ENCODE measurements at regions of chr12 and their contacts with region 1.

Region 1: DNA sequence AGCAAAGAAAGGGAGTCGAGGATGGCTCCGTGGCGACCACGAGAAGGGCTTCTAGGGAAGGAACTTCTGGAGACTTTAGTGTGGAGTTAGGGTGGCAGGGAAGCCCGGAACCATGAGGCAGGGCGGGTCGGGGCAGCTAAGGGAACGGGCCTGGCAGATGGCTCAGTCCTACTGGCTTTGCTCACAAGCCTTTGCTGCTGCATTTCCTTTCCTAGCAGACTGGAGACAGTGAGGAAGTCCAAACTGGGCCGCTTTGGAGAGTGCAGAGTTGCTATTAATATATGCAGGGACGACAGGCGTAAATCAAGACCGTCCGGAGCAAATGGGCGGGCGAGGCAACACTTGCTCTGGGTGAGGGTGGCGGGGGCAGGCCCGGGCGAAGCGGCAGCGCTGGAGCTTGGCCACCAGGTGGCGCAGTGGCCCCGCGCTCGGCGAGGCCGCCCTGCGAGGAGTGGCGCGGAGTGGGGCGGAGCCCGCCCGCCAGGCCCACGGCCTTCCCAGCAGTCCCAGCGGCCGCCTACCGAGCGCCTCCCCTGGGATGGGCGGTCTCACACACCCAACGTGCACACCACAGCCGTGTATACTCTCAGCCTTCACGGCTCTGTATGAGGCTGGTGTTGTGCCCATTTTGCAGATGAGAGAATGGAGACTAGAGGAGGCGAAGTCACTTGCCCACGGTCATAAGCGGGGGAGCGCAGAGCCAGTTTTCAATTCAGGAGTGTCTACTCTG is 24.4 kb upstream of the LRTM2 start:
- DNase-seq: peak; percentile 89
- H3K4me3 ChIP-seq: peak overlapping the region; percentile 32 to 62 (median 35)
- H3K27ac ChIP-seq: no peak overlapping the region
- H3K4me1 ChIP-seq: peaks cover 12% of the 10 kb centered on the region
- H3K27me3 ChIP-seq: no peaks in the 10 kb centered on the region
- CTCF ChIP-seq: peak; percentile 88 to 99
- POLR2A ChIP-seq: peak; percentile 67

Region 2: DNA sequence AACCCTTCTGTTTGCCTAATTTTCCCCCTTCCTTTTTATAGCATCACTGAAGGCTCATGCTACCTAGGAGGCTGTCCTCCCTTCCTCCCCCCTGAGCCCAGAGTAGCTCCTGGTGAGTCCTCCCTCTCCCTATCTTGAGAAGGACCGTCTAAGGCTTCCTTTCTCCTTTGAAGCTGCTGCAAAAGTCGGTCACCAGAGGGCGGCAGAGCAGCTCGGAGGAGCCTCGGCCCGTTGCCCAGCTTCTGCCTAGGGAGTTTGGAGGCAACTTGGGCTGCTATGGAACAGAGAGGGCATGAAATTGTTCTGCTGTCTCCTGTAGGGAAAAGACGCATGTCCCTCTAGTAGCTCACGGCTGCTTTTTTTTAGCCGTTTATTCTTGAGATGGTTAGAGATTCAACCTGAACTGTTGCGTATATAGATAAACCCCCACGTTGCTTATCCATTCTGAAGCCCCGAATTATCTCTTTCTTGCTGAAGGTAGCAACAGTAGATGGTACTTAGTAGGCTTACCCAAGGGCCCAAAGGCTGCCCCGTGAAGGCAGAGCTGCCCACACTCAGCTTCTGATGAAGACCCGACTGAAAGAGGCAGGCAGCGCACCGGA is 161.3 kb before region 1 on chr12:
- CTCF ChIA-PET with region 1: interaction called, 185 read pairs
- POLR2A ChIA-PET with region 1: interaction called, 3 read pairs
- dilution Hi-C with region 1: no loop called
- intact Hi-C with region 1: loop called (anchors 1 kb)
- DNase-seq: peak; percentile 65
- H3K4me3 ChIP-seq: no peak overlapping the region
- H3K27ac ChIP-seq: no peak overlapping the region
- H3K4me1 ChIP-seq: peaks cover 5% of the 10 kb centered on the region
- H3K27me3 ChIP-seq: peaks cover 36 to 42% of the 10 kb centered on the region in 2 experiments
- CTCF ChIP-seq: peak; percentile 85 to 87
- POLR2A ChIP-seq: no peak

Region 3: DNA sequence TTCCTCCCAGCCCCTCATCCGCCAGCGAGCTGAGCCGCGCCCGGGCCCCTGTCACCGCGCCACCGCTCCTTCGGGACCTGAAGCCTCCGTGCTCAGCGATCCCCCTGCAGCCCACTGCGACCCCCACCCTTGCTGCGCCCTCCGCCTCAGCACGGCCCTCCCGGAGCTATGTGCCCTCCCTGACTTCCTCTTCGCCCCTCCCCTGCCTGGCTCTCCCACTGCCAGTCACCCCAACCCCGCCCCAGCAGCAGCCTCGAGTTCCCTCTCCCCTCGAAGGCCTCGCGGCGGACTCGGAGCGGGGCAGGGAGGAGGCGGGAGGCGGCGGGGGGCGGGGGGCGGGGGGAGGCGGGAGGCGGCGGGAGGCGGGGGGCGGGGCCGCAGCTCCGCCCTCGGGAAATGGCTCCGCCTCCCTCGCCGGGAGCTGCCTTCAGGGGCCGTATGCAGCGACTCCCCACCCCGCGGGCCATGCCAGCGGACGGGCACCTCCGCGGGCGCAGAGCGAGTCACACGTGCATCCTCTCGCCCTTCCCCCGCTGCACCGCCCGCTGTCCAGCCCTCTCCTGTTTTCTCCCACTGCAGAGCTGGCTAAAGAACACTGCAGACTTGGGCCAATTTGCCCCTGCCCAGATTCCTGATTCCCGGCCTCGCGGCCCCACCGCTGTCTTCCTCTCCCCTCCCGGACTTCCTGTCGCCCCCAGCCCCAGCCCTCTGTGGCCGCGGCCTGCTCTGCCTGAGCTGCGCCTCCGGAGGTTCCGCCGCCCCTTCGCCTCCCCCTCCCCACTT is 134.2 kb before region 1 on chr12:
- CTCF ChIA-PET with region 1: interaction called, 840 read pairs
- POLR2A ChIA-PET with region 1: interaction called, 4 read pairs
- dilution Hi-C with region 1: no loop called
- intact Hi-C with region 1: no loop called
- DNase-seq: peak; percentile 90
- H3K4me3 ChIP-seq: peak overlapping the region in 1 of 3 experiments; percentile 37
- H3K27ac ChIP-seq: no peak overlapping the region
- H3K4me1 ChIP-seq: peaks cover 13% of the 10 kb centered on the region
- H3K27me3 ChIP-seq: no peaks in the 10 kb centered on the region
- CTCF ChIP-seq: no peak
- POLR2A ChIP-seq: no peak

Region 4: DNA sequence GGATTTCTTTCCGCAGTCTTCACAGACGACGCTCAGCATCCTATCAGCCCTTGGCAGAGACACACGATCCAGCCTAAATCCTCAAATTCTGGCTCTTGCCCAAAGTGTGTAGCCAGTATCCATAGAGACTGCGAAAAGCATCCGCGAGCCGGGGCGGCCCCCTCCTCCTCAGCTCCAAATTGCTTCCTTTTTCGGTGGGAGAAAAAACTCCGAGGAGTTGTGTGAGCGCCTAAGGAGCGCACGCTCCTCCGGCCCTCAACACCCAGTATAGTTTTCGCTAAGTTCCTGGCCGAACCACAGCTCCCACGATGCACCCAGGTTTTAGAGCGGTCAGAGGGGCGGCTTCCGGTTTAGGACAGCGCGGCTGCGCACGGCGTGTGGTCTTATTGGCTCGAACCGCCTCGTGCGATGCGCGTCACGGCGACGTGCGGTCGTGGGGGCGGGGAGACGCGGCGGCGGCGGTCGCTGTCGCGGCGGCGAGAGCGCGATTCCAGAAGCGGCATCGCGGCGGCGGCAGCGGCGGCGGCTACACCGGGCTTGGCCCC is 105.3 kb before region 1 on chr12 and contains the start of gene ADIPOR2:
- CTCF ChIA-PET with region 1: interaction called, 17 read pairs
- POLR2A ChIA-PET with region 1: interaction called, 3 read pairs
- dilution Hi-C with region 1: no loop called
- intact Hi-C with region 1: loop called (anchors 1 kb)
- DNase-seq: peak; percentile 94
- H3K4me3 ChIP-seq: peak within 1 kb of the TSS; percentile 72 to 95 (median 90)
- H3K27ac ChIP-seq: peak within 1 kb of the TSS; percentile 93
- H3K4me1 ChIP-seq: peaks cover 14% of the 10 kb centered on the region
- H3K27me3 ChIP-seq: no peaks in the 10 kb centered on the region
- CTCF ChIP-seq: no peak
- POLR2A ChIP-seq: peak; percentile 91
- total RNA-seq, gene ADIPOR2: 57.3 and 59.4 TPM in 2 replicates

Region 5: DNA sequence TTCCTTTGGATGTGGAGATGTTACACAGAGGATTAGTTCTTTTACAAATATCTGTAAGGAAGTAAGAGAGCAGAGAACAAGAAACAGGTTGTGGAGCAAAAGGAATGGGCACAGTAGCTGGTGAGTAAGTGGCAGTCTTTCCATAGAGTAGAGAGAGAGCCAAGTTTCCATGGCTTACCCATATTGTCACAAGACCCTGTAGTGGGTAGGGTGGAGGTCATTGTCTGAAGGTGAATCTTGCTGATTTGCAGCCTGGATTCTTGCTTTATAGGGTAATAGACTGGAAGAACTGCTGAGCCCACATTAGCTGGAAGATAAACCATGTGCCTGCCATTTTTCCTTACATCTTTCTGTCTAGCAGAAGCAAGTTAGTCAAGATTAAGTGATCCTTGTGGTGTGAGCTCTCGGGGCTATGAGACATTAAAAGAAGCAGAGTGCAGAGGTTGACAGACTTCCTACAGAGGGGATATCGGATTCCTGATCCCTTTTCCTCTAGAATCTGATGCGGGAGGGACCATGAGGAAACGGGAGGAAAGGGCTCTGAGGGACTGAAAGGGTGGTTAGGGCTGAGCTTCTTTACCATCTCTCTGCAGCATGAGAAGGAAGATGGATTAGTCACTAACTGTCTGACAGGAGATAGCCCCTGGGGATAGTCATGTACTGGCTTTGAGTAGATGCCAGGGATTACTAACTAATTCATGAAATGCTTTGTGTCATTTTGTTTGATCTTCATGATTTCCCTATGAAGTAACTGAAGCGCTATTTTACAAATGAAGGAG is 19.6 kb before region 1 on chr12:
- CTCF ChIA-PET with region 1: interaction called, 11 read pairs
- POLR2A ChIA-PET with region 1: no interaction called
- dilution Hi-C with region 1: no loop called
- intact Hi-C with region 1: no loop called
- DNase-seq: no peak
- H3K4me3 ChIP-seq: no peak overlapping the region
- H3K27ac ChIP-seq: no peak overlapping the region
- H3K4me1 ChIP-seq: peaks cover 9% of the 10 kb centered on the region
- H3K27me3 ChIP-seq: no peaks in the 10 kb centered on the region
- CTCF ChIP-seq: no peak
- POLR2A ChIP-seq: no peak

Region 6: GRCh38 chr12:2004113-2004929 is 208.4 kb after region 1 on chr12 and contains the start of gene DCP1B:
- CTCF ChIA-PET with region 1: interaction called, 6 read pairs
- POLR2A ChIA-PET with region 1: no interaction called
- dilution Hi-C with region 1: no loop called
- intact Hi-C with region 1: loop called (anchors 1 kb)
- DNase-seq: peak; percentile 98
- H3K4me3 ChIP-seq: peak within 1 kb of the TSS; percentile 31 to 87 (median 82)
- H3K27ac ChIP-seq: peak within 1 kb of the TSS; percentile 35
- H3K4me1 ChIP-seq: peaks cover 15% of the 10 kb centered on the region
- H3K27me3 ChIP-seq: peaks cover 0 to 6% of the 10 kb centered on the region in 2 experiments
- CTCF ChIP-seq: peak in 1 of 2 donors; percentile 14
- POLR2A ChIP-seq: peak; percentile 64
- total RNA-seq, gene DCP1B: 10.6 and 11.2 TPM in 2 replicates

Measured in endothelial cell of umbilical vein (primary cell).